ENCODE measurements at regions of chr1 and their contacts with region 1.

Region 1: GRCh38 chr1:101379950-101380349 is 143.1 kb downstream of the S1PR1 start:
- DNase-seq: peak; percentile 80
- ATAC-seq: peak; percentile 95
- H3K4me3 ChIP-seq: 0 out of 2 replicates have a peak overlapping the region, but pooled peaks have one; percentile 16
- H3K27ac ChIP-seq: peak overlapping the region; percentile 91
- H3K4me1 ChIP-seq: peaks cover 32% of the 10 kb centered on the region
- H3K27me3 ChIP-seq: no peaks in the 10 kb centered on the region
- CTCF ChIP-seq: no peak
- EP300 ChIP-seq: no peak
- POLR2A ChIP-seq: no peak
- RAD21 ChIP-seq: 0 out of 2 replicates have a peak, but pooled peaks have one; percentile 2

Region 2: DNA sequence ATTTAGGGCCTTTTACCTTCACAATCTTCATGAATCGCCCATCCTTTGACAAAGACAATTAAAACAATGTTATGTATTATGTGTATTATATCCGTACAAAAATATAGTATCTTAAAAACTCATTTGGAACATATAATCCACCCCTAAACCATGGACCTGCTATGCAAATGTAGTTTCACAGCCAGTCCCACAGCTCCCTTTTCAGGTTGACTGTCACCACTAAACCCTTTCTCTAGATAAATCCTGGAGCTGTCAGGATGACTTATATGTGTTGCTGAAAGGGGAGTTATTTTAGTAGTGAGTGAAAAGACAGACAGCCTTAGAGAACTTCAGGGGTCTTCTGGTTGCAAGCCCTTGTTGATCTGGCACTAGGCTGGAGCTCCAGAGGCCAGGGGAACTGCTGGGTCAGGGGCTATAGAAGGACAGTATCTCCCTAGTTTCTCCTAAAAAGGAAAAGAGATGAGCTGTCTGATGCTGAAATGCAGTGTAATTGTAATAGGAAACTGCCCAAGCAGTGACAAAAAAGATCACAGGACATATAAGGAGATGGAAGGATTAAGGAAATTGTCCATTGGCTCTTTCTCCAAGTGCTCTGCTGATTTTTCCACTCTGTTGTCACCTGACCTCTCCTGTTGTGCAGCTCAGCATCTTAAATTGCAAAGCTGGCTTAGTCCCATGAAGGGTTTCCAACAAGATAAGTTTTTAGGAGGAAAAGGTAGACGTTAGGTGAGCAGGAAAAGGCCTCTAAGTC is 15.4 kb before region 1 on chr1:
- CTCF ChIA-PET with region 1: interaction called, 8 read pairs
- POLR2A ChIA-PET with region 1: interaction called, 12 read pairs
- RAD21 ChIA-PET with region 1: interaction called, 15 read pairs
- SMC1A ChIA-PET with region 1: interaction called, 618 read pairs
- in situ Hi-C with region 1: no loop called
- intact Hi-C with region 1: no loop called
- DNase-seq: no peak
- ATAC-seq: peak; percentile 68
- H3K4me3 ChIP-seq: no peak overlapping the region
- H3K27ac ChIP-seq: peak overlapping the region; percentile 83
- H3K4me1 ChIP-seq: peaks cover 29% of the 10 kb centered on the region
- H3K27me3 ChIP-seq: no peaks in the 10 kb centered on the region
- CTCF ChIP-seq: no peak
- EP300 ChIP-seq: 0 out of 4 replicates have a peak, but pooled peaks of 1 of the 2 experiments have one; percentile 15
- POLR2A ChIP-seq: no peak
- RAD21 ChIP-seq: no peak

Region 3: GRCh38 chr1:101399222-101399621 is 19.3 kb after region 1 on chr1:
- CTCF ChIA-PET with region 1: interaction called, 53 read pairs
- POLR2A ChIA-PET with region 1: interaction called, 18 read pairs
- RAD21 ChIA-PET with region 1: interaction called, 225 read pairs
- SMC1A ChIA-PET with region 1: interaction called, 618 read pairs
- in situ Hi-C with region 1: no loop called
- intact Hi-C with region 1: no loop called
- DNase-seq: no peak
- ATAC-seq: peak; percentile 14
- H3K4me3 ChIP-seq: no peak overlapping the region
- H3K27ac ChIP-seq: peak overlapping the region; percentile 74
- H3K4me1 ChIP-seq: peaks cover 13% of the 10 kb centered on the region; the same call in 1 of the 2 replicates
- H3K27me3 ChIP-seq: no peaks in the 10 kb centered on the region
- CTCF ChIP-seq: no peak
- EP300 ChIP-seq: no peak
- POLR2A ChIP-seq: no peak
- RAD21 ChIP-seq: no peak